Activated T-helper 2 cell treated with anti-CD3 and anti-CD28 coated beads, Interferon-gamma antibody, Interleukin-2, Interleukin-4, amounts not matched to agents 10 μg/mL and 5 μg/mL and 100 μg/mL, durations not matched to agents 14 hours and 24 hours and 36 hours (primary cell): ENCODE measurements at regions of chr3 and their contacts with region 1.

Region 1: GRCh38 chr3:16511681-16512434 is 1.6 kb downstream of the RFTN1 start:
- DNase-seq: peak; percentile 72
- H3K4me3 Mint-ChIP-seq: peak overlapping the region; percentile 91
- H3K27ac Mint-ChIP-seq: peak overlapping the region; percentile 85
- H3K4me1 Mint-ChIP-seq: peaks cover 72% of the 10 kb centered on the region
- H3K27me3 Mint-ChIP-seq: no peaks in the 10 kb centered on the region

Region 2: DNA sequence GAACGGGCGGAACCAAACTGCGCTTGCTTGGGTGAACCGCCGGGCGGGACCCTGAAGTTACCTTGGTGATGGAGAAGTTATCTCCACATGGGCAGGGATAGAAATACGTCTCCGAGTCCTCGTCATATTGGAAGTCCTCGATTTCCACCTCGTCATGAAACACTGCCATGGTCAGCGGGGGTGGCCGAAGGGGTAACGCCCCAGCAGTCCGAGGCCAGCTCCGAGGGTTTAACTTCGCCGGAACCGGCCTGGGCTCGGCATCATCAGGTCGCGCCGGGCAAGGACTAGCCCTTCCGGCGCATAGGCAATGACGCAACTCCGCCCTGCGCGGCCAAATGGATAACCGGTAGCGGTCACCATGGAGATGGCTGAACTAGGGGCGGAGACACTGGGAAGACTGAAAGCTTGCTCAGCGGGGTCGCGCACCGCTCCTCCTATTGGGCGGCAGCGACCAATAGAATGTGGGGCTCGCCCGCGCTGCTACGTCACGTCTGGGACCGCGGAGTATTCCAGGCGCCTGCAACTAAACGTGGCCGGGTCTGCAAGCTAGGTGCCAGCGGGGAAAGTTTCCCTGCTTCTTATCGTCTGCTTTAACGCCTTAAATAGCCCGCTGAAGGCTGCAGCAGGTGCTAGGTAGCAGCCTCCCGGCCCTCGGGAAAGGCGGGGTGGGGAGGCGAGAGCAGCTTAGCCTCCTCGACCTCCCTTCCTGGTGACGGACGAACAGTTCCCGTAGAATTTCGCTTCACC is 247.0 kb before region 1 on chr3 and contains the starts of genes DPH3 and OXNAD1:
- intact Hi-C with region 1: loop called (anchors 2 kb)
- DNase-seq: peak; percentile 99
- H3K4me3 Mint-ChIP-seq: peak within 1 kb of the TSS; percentile 96
- H3K27ac Mint-ChIP-seq: peak within 1 kb of the TSS; percentile 95
- H3K4me1 Mint-ChIP-seq: peaks cover 20% of the 10 kb centered on the region
- H3K27me3 Mint-ChIP-seq: no peaks in the 10 kb centered on the region
- total RNA-seq, gene DPH3: 22.7 and 23.1 TPM in 2 replicates
- total RNA-seq, gene OXNAD1: 18.7 and 20.5 TPM in 2 replicates

Region 3: DNA sequence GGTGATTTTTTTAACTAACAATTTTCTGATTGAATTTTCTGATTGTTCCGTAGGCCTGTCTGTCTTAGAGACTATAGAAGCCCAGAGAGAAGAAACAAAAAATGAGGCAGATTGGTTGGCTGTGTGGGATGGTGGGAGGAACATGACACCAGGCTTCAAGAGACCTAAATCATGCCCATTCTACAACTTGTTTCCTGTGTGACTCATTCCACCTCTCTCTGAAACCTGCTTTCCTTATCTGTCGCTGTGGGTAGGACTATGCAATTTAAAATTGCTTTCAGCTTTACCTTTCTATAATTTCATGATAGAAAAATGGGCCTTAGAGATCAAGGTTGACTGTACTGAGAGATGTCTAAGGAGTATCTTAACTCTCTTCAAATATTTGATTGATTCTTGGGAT is 202.3 kb before region 1 on chr3:
- intact Hi-C with region 1: loop called (anchors 2 kb)
- DNase-seq: peak; percentile 56
- H3K4me3 Mint-ChIP-seq: peak overlapping the region; percentile 60
- H3K27ac Mint-ChIP-seq: peak overlapping the region; percentile 91
- H3K4me1 Mint-ChIP-seq: peaks cover 80% of the 10 kb centered on the region
- H3K27me3 Mint-ChIP-seq: no peaks in the 10 kb centered on the region

Region 4: DNA sequence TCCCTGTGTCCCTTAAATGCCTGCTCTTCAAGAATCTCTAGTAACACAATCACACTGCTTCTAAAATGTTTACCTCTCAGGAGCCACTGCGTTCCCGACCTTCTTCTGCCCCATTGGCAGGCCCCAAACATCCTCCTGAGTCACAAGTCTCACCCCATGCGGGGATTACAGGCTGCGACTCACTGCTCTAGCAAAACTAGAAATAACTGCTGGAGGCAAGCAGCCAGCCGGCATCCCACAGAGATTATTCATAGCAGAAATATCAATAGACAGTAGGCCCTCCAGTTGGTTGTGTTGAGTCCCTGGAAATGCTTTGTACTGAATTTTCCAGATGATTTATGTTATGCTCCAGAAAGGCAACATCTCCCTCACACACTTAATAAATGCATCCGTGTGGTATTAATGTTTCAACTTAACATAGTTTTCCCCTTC is 63.2 kb before region 1 on chr3:
- intact Hi-C with region 1: loop called (anchors 1 kb)
- DNase-seq: no peak
- H3K4me3 Mint-ChIP-seq: no peak overlapping the region
- H3K27ac Mint-ChIP-seq: peak overlapping the region; percentile 79
- H3K4me1 Mint-ChIP-seq: peaks cover 55% of the 10 kb centered on the region
- H3K27me3 Mint-ChIP-seq: no peaks in the 10 kb centered on the region

Region 5: GRCh38 chr3:16482770-16483531 is 28.9 kb before region 1 on chr3:
- intact Hi-C with region 1: loop called (anchors 1 kb)
- DNase-seq: peak; percentile 38
- H3K4me3 Mint-ChIP-seq: peak overlapping the region; percentile 37
- H3K27ac Mint-ChIP-seq: peak overlapping the region; percentile 59
- H3K4me1 Mint-ChIP-seq: peaks cover 61% of the 10 kb centered on the region
- H3K27me3 Mint-ChIP-seq: no peaks in the 10 kb centered on the region

Region 6: GRCh38 chr3:16912400-16913263 is 400.8 kb after region 1 on chr3:
- intact Hi-C with region 1: no loop called
- DNase-seq: no peak
- H3K4me3 Mint-ChIP-seq: no peak overlapping the region
- H3K27ac Mint-ChIP-seq: no peak overlapping the region
- H3K4me1 Mint-ChIP-seq: peaks cover 39% of the 10 kb centered on the region
- H3K27me3 Mint-ChIP-seq: no peaks in the 10 kb centered on the region

Region 7: DNA sequence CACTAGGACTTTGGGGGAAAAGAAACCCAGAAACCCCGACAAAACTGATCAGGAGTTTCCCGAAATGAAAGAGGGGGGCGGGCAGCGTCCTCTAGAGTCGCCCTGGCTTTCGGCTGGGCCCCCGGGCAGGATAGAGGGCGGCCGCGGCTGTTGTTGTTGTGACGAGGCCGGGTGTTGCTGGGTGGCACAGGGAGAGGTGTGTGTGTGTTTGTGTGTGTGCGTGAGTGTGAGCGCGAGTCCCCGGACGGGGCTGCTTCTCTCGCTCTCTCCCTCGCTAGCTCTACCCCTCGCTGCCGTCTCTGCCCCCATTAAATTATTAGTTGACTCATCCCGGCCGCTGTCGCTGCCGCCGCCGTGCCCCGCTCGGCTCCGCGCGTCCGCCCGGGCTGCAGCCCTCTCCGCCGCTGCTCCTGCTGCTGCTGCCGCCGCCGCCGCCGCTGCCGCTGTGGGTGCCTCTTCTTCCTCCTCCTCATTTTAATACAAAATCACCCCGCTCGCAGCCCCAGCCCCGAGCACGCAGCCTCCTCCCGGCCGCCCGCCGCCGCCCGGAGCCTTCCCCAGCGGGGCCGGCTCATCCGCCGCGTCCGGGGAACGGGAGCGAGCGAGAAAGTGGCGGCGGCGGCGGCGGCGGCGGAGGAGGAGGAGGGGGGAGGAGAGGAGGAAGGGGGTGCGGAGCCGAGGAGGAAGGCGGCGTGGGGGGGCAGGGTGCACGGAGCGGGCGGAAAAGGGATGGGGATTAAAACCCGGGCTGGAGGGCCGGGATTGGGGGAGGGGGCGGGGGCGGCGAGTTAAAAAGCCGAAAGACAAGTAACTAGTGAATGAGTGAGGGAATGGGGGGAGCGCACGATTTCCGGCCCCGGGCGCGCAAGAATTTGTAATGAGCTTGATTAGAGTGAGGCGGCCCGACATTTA is 1913.1 kb after region 1 on chr3 and contains the start of gene SATB1:
- intact Hi-C with region 1: loop called (anchors 10 kb)
- DNase-seq: peak; percentile 63
- H3K4me3 Mint-ChIP-seq: peak within 1 kb of the TSS; percentile 89
- H3K27ac Mint-ChIP-seq: peak within 1 kb of the TSS; percentile 93
- H3K4me1 Mint-ChIP-seq: peaks cover 62% of the 10 kb centered on the region
- H3K27me3 Mint-ChIP-seq: no peaks in the 10 kb centered on the region
- total RNA-seq, gene SATB1: 831 and 866 TPM in 2 replicates